B cell (primary cell): ENCODE measurements at regions of chr11 and their contacts with region 1.

Region 1: GRCh38 chr11:2377511-2378443 is 667 bp downstream of the CD81 start:
- DNase-seq: peak; percentile 73
- ATAC-seq: peak; percentile 42
- H3K4me3 ChIP-seq: peak overlapping the region; percentile 9 to 92 (median 79)
- H3K4me3 Mint-ChIP-seq: peak overlapping the region; percentile 89
- H3K27ac ChIP-seq: peak overlapping the region; percentile 50 to 86
- H3K27ac Mint-ChIP-seq: peak overlapping the region; percentile 82
- H3K4me1 ChIP-seq: peaks cover 50 to 55% of the 10 kb centered on the region in 2 donors
- H3K4me1 Mint-ChIP-seq: peaks cover 48% of the 10 kb centered on the region
- H3K27me3 ChIP-seq: no peaks in the 10 kb centered on the region
- H3K27me3 Mint-ChIP-seq: no peaks in the 10 kb centered on the region
- CTCF ChIP-seq: no peak

Region 2: DNA sequence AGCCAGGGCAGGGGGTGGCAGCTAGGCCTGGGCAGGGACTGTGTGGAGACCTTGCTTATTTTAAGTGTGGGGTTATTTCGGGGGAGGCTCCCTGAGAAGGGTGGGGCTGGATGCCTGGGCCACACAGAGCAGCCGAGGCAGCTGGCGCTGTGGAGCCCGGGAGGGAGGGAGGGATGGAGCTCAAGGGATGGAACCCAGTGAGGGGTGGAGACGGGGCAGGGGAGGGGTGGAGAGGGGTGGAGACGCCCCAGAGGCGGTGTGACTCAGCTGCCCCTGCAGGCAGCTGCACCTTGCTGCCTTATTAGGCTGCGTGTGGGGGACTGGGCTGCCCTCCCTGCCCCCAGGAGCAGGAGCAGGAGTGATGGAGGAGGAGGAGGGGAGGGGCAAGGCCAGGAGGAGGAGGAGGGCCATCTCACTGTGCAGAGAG is 13.0 kb after region 1 on chr11:
- CTCF ChIA-PET with region 1: interaction called, 7 read pairs
- POLR2A ChIA-PET with region 1: interaction called, 27 read pairs
- intact Hi-C with region 1: loop called (anchors 1 kb)
- DNase-seq: no peak
- ATAC-seq: no peak
- H3K4me3 ChIP-seq: no peak overlapping the region
- H3K4me3 Mint-ChIP-seq: peak overlapping the region; percentile 55
- H3K27ac ChIP-seq: no peak overlapping the region
- H3K27ac Mint-ChIP-seq: peak overlapping the region; percentile 66
- H3K4me1 ChIP-seq: peaks cover 100% of the 10 kb centered on the region in 2 donors
- H3K4me1 Mint-ChIP-seq: peaks cover 83% of the 10 kb centered on the region
- H3K27me3 ChIP-seq: no peaks in the 10 kb centered on the region
- H3K27me3 Mint-ChIP-seq: no peaks in the 10 kb centered on the region
- CTCF ChIP-seq: no peak

Region 3: GRCh38 chr11:2400069-2400760 is 22.4 kb after region 1 on chr11 and contains the start of gene TSSC4:
- CTCF ChIA-PET with region 1: interaction called, 3 read pairs
- POLR2A ChIA-PET with region 1: interaction called, 15 read pairs
- intact Hi-C with region 1: loop called (anchors 1 kb)
- DNase-seq: peak; percentile 100
- ATAC-seq: peak; percentile 81
- H3K4me3 ChIP-seq: peak within 1 kb of the TSS; percentile 87 to 100 (median 95)
- H3K4me3 Mint-ChIP-seq: peak within 1 kb of the TSS; percentile 90
- H3K27ac ChIP-seq: peak within 1 kb of the TSS; percentile 91 to 93
- H3K27ac Mint-ChIP-seq: peak within 1 kb of the TSS; percentile 98
- H3K4me1 ChIP-seq: peaks cover 26 to 40% of the 10 kb centered on the region in 2 donors
- H3K4me1 Mint-ChIP-seq: peaks cover 25% of the 10 kb centered on the region
- H3K27me3 ChIP-seq: no peaks in the 10 kb centered on the region
- H3K27me3 Mint-ChIP-seq: no peaks in the 10 kb centered on the region
- CTCF ChIP-seq: peak; percentile 94
- total RNA-seq, gene TSSC4: 57.5 and 59.5 TPM in 2 replicates

Region 4: GRCh38 chr11:3057069-3057963 is 679.5 kb after region 1 on chr11 and contains the start of gene CARS1:
- CTCF ChIA-PET with region 1: no interaction called
- POLR2A ChIA-PET with region 1: no interaction called
- intact Hi-C with region 1: loop called (anchors 2 kb)
- DNase-seq: peak; percentile 94
- ATAC-seq: peak; percentile 96
- H3K4me3 ChIP-seq: peak within 1 kb of the TSS; percentile 22 to 97 (median 87)
- H3K4me3 Mint-ChIP-seq: peak within 1 kb of the TSS; percentile 93
- H3K27ac ChIP-seq: peak within 1 kb of the TSS; percentile 43 to 94
- H3K27ac Mint-ChIP-seq: peak within 1 kb of the TSS; percentile 83
- H3K4me1 ChIP-seq: peaks cover 15 to 20% of the 10 kb centered on the region in 2 donors
- H3K4me1 Mint-ChIP-seq: peaks cover 35% of the 10 kb centered on the region
- H3K27me3 ChIP-seq: no peaks in the 10 kb centered on the region
- H3K27me3 Mint-ChIP-seq: no peaks in the 10 kb centered on the region
- CTCF ChIP-seq: no peak
- total RNA-seq, gene CARS1: 49.5 and 56.7 TPM in 2 replicates